Colonic mucosa (tissue), 4 donors: ENCODE measurements at regions of chr18 and their contacts with region 1.

Region 1: DNA sequence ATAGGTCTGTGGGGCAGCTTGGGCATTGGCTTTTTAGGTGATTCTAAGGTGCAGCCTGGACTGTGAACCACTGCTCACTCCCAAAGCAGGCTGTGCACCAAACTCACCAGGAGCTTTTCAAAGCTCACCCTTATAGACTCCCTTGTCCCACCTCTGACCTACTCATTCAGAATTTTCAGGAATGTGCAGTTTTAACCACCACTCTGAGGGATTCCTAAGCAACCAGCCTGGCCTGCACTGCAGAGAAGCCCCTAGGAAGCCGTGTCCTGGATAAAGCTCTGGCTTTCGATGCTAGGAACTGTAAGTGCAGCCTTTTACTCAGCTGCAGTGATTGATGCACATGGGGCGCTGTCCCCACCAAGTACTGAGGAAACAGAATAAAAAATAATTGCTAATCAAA is 33.0 kb downstream of the MRO start:
- DNase-seq: no peak
- H3K4me3 ChIP-seq: no peak overlapping the region
- H3K27ac ChIP-seq: no peak overlapping the region
- H3K4me1 ChIP-seq: no peaks in the 10 kb centered on the region
- H3K27me3 ChIP-seq: no peaks in the 10 kb centered on the region
- CTCF ChIP-seq: no peak

Region 2: DNA sequence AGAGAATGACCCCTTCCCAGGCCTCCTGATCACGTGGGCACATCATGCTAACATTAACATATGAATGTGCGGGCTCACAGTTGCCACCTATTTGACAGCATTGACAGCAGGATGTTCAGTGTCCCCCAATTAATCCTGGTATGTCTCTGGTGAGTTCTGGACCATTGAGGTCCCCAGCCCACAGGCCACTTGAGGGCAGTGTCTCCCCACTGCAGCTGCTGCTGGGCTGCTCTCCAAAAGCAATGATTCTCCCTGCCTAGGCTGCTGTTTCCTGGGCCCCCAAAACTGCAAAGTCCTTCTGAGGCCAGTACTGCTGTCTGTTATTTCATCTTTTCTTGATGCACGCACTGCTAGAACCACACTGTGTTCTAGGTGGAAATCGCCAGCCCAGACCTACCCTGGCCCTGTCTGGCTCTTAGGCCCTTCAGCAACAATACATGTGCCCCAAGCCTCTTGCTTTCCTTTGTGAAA is 279.7 kb before region 1 on chr18:
- intact Hi-C with region 1: loop called (anchors 10 kb)
- DNase-seq: no peak
- H3K4me3 ChIP-seq: no peak overlapping the region
- H3K27ac ChIP-seq: no peak overlapping the region
- H3K4me1 ChIP-seq: no peaks in the 10 kb centered on the region
- H3K27me3 ChIP-seq: no peaks in the 10 kb centered on the region
- CTCF ChIP-seq: peak; percentile 40

Region 3: DNA sequence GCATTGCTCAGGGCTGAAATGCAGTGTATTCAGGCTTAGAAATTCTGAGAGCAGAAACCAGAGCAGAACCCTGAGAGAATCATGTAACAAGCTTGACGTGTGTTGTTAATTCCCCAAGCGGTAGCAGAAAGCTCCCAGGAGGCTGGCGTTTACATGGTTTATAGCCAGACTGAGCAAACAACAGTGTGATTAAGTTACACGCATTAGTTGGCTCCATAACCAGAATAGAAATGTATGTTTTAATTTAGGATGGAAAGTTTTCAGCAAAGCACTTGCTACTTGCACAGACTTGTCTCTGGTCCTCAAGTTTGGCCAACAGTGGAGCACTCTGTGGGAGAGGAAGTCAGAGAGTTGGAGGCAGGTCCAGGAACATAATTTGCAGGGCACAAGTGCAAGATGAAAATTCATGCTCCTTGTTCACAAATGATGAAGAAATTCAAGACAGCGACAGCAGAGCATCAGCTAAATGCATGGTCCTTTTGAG is 157.7 kb before region 1 on chr18:
- intact Hi-C with region 1: no loop called
- DNase-seq: no peak
- H3K4me3 ChIP-seq: no peak overlapping the region
- H3K27ac ChIP-seq: no peak overlapping the region
- H3K4me1 ChIP-seq: peaks cover 3% of the 10 kb centered on the region
- H3K27me3 ChIP-seq: no peaks in the 10 kb centered on the region
- CTCF ChIP-seq: no peak

Region 4: DNA sequence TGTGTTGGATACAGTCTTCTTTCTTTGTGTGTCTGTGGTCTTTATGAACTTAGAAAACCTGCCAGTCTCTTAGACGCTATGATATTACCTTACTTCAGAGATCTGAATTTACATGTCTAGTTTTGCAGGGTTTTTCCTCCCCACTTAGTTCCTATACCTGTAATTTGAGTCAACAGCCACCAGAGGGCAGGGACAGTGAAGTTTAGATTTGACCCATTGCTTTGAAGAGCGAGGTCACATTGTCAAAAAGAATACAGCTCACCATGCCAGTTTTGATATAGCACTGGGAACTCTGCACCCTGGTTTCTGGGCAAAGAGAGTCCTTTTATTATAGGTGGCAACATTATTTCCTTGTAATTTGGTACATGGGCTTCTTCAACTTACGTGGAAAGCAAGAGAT is 124.7 kb before region 1 on chr18:
- intact Hi-C with region 1: loop called (anchors 10 kb)
- DNase-seq: peak; percentile 24
- H3K4me3 ChIP-seq: no peak overlapping the region
- H3K27ac ChIP-seq: no peak overlapping the region
- H3K4me1 ChIP-seq: no peaks in the 10 kb centered on the region
- H3K27me3 ChIP-seq: no peaks in the 10 kb centered on the region
- CTCF ChIP-seq: peak; percentile 18